Endothelial cell of umbilical vein (primary cell): ENCODE measurements at regions of chr5 and their contacts with region 1.

Region 1: GRCh38 chr5:115098041-115098702 is 71.5 kb downstream of the TRIM36 start:
- DNase-seq: peak; percentile 52
- H3K4me3 ChIP-seq: no peak overlapping the region
- H3K27ac ChIP-seq: no peak overlapping the region
- H3K4me1 ChIP-seq: no peaks in the 10 kb centered on the region
- H3K27me3 ChIP-seq: peaks cover 0 to 8% of the 10 kb centered on the region in 2 experiments
- CTCF ChIP-seq: peak; percentile 52 to 76
- POLR2A ChIP-seq: no peak

Region 2: GRCh38 chr5:115109356-115109755 is 11.2 kb after region 1 on chr5:
- CTCF ChIA-PET with region 1: interaction called, 23 read pairs
- POLR2A ChIA-PET with region 1: no interaction called
- dilution Hi-C with region 1: no loop called
- intact Hi-C with region 1: no loop called
- DNase-seq: no peak
- H3K4me3 ChIP-seq: no peak overlapping the region
- H3K27ac ChIP-seq: no peak overlapping the region
- H3K4me1 ChIP-seq: no peaks in the 10 kb centered on the region
- H3K27me3 ChIP-seq: no peaks in the 10 kb centered on the region
- CTCF ChIP-seq: no peak
- POLR2A ChIP-seq: no peak

Region 3: DNA sequence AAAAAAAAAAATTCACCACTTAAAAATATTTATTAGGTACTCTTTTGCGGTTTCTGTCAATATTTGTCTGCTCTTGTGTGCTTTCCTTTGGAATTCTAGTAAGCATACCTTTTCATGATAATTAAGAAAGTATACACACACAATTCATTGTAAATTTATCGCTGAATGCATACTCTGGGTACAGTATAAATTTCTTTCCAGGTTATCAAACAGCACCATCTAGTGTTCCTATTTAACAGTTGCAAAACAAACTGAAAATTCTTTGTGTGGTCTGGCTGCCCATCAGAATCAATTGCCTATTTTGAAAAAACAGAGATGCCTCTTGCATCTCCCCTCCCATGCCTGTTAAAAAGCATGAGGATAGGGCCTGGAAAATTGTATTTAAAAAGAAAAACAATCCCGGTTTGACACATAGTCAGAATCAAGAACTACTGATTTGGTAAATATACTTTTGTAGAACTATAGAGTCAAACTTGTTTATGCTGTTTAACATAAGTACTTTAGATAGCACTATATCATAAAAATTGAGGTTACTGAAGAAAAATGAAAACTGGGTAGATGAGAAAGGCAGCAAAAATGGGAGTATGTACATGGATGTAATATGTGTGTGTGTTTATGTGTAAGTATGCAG is 148.3 kb after region 1 on chr5:
- CTCF ChIA-PET with region 1: interaction called, 27 read pairs
- POLR2A ChIA-PET with region 1: no interaction called
- dilution Hi-C with region 1: no loop called
- intact Hi-C with region 1: loop called (anchors 1 kb)
- DNase-seq: peak; percentile 49
- H3K4me3 ChIP-seq: no peak overlapping the region
- H3K27ac ChIP-seq: no peak overlapping the region
- H3K4me1 ChIP-seq: no peaks in the 10 kb centered on the region
- H3K27me3 ChIP-seq: no peaks in the 10 kb centered on the region
- CTCF ChIP-seq: peak; percentile 34 to 37
- POLR2A ChIP-seq: no peak